Activated CD4-positive, alpha-beta T cell treated with anti-CD3 and anti-CD28 coated beads, Interleukin-2, amount 10 ng/mL, durations not matched to agents 24 days and 14 days (primary cell): ENCODE measurements at regions of chr12 and their contacts with region 1.

Region 1: DNA sequence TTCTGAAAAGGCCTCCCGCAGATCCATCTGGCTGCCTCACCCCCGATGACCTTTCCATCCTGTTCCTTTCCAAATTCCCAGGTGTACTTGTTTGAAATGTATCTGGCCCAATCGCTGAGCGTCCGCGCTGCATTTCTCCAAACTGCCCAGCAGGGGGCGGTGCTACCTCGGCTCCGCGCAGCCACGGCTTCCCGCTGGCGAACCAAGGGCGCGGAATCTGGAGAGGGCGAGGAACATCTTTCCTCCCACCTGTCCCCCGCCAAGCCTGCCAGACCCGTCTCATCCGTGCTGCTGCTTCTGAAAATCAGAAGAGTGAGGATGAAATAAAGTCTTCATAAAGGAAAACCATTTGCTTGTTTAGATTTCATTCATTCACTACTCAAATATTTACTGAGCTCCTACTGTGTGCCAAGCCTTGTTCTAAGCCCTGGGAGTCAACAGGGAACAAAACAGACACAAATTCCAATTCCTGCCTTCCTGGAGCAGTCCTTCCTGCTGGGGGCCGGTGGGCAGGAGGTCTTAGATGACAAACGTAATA is 16.8 kb upstream of the MYL2 start:
- DNase-seq: peak; percentile 86
- H3K4me3 Mint-ChIP-seq: no peak overlapping the region
- H3K27ac Mint-ChIP-seq: no peak overlapping the region
- H3K4me1 Mint-ChIP-seq: no peaks in the 10 kb centered on the region
- H3K27me3 Mint-ChIP-seq: peaks cover 8% of the 10 kb centered on the region

Region 2: GRCh38 chr12:111298582-111299436 is 361.6 kb after region 1 on chr12:
- intact Hi-C with region 1: loop called (anchors 5 kb)
- DNase-seq: peak; percentile 79
- H3K4me3 Mint-ChIP-seq: no peak overlapping the region
- H3K27ac Mint-ChIP-seq: no peak overlapping the region
- H3K4me1 Mint-ChIP-seq: no peaks in the 10 kb centered on the region
- H3K27me3 Mint-ChIP-seq: no peaks in the 10 kb centered on the region

Region 3: GRCh38 chr12:111313833-111314259 is 376.7 kb after region 1 on chr12:
- intact Hi-C with region 1: loop called (anchors 1 kb)
- DNase-seq: peak; percentile 89
- H3K4me3 Mint-ChIP-seq: no peak overlapping the region
- H3K27ac Mint-ChIP-seq: no peak overlapping the region
- H3K4me1 Mint-ChIP-seq: peaks cover 7% of the 10 kb centered on the region
- H3K27me3 Mint-ChIP-seq: peaks cover 6% of the 10 kb centered on the region